A673 (cell line): ENCODE measurements at regions of chr3 and their contacts with region 1.

Region 1: GRCh38 chr3:82133070-82133606 is 371.7 kb upstream of the GBE1 start:
- DNase-seq: peak; percentile 57
- H3K4me3 ChIP-seq: no peak overlapping the region
- H3K27ac ChIP-seq: no peak overlapping the region
- H3K4me1 ChIP-seq: no peaks in the 10 kb centered on the region
- H3K27me3 ChIP-seq: no peaks in the 10 kb centered on the region
- CTCF ChIP-seq: peak; percentile 80

Region 2: GRCh38 chr3:81419228-81419627 is 713.9 kb before region 1 on chr3:
- CTCF ChIA-PET with region 1: no interaction called
- POLR2A ChIA-PET with region 1: no interaction called
- intact Hi-C with region 1: loop called (anchors 10 kb)
- DNase-seq: peak; percentile 5
- H3K4me3 ChIP-seq: no peak overlapping the region
- H3K27ac ChIP-seq: no peak overlapping the region
- H3K4me1 ChIP-seq: no peaks in the 10 kb centered on the region
- H3K27me3 ChIP-seq: no peaks in the 10 kb centered on the region
- CTCF ChIP-seq: peak; percentile 52; the same call in 1 of the 2 replicates

Region 3: DNA sequence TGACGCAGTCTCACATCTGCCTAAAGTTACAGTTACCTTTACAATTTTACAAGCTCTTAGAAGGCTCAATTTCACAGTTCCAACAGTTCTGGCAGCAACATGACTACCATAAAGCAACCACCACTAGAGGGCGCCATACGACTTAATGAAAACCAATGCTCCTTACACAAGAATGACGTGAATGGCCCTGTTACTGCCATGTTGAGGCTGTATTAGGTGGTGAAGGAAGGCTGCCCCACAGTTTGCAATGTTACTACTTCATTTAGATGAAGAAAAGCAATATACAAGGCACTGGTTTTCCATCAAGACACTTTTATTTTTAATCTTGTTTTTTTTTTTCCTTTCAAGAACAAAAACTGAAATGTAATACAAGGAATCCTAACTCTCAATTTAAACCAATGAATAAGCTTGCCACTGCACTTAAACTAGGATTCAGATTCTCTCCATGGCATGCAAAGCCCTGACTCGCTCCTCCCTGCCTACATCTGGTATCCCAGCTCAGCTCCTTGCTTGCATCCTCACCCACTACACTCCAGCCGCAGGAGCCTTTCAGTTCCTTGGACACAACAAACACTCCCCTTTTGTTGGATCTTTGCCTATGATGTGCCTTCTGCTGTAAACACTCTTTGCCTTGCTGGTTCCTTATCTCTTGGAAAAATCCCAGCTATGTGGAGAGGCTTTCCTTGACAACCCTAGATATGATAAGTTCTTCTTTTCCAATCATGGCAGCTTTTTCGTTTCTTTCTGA is 642.4 kb before region 1 on chr3:
- CTCF ChIA-PET with region 1: no interaction called
- POLR2A ChIA-PET with region 1: no interaction called
- intact Hi-C with region 1: loop called (anchors 5 kb)
- DNase-seq: peak; percentile 88
- H3K4me3 ChIP-seq: no peak overlapping the region
- H3K27ac ChIP-seq: no peak overlapping the region
- H3K4me1 ChIP-seq: no peaks in the 10 kb centered on the region
- H3K27me3 ChIP-seq: no peaks in the 10 kb centered on the region
- CTCF ChIP-seq: peak; percentile 88

Region 4: GRCh38 chr3:81581966-81582599 is 551.1 kb before region 1 on chr3:
- CTCF ChIA-PET with region 1: no interaction called
- POLR2A ChIA-PET with region 1: no interaction called
- intact Hi-C with region 1: loop called (anchors 10 kb)
- DNase-seq: peak; percentile 61
- H3K4me3 ChIP-seq: no peak overlapping the region
- H3K27ac ChIP-seq: no peak overlapping the region
- H3K4me1 ChIP-seq: no peaks in the 10 kb centered on the region
- H3K27me3 ChIP-seq: no peaks in the 10 kb centered on the region
- CTCF ChIP-seq: peak; percentile 80

Region 5: GRCh38 chr3:81666493-81667121 is 466.5 kb before region 1 on chr3:
- CTCF ChIA-PET with region 1: no interaction called
- POLR2A ChIA-PET with region 1: no interaction called
- intact Hi-C with region 1: loop called (anchors 1 kb)
- DNase-seq: peak; percentile 15
- H3K4me3 ChIP-seq: no peak overlapping the region
- H3K27ac ChIP-seq: no peak overlapping the region
- H3K4me1 ChIP-seq: no peaks in the 10 kb centered on the region
- H3K27me3 ChIP-seq: no peaks in the 10 kb centered on the region
- CTCF ChIP-seq: peak; percentile 76

Region 6: DNA sequence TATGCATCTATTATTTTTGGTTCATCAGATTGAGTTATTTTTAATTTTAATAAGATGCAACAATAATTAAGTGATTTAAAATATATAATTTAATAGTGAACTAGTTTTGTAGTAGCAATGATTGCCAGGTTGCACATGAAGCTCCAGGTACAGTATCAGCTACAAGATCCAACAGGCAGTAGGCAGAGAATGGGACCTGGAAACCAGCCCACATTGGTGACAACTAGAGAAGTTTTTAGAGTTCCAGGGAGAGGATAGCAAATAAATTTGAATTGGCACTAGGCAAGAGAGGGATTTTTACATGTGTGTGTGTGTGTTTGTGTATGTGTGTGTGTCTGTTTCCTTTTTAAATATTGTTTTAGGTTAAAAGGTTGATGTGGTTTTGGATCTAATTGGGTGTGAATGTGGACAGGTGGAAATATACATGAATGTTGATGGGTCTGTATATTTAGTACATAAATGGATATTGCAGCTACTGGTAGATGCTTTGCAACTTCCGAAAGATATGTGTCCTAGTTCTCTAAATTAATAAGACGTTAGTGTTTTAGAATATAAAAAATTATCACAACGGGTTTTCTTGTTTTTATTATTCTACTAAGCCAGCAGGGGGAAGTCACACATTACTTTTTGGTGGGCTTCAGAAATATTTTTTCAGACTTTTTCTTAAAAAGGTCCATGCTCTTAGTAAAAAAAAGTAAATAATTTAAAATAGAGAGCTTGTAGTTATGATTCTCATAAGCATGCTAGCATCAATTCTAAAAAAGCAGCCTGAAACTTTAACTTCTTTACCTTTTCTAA is 261.6 kb before region 1 on chr3:
- CTCF ChIA-PET with region 1: no interaction called
- POLR2A ChIA-PET with region 1: no interaction called
- intact Hi-C with region 1: loop called (anchors 1 kb)
- DNase-seq: peak; percentile 5
- H3K4me3 ChIP-seq: no peak overlapping the region
- H3K27ac ChIP-seq: no peak overlapping the region
- H3K4me1 ChIP-seq: no peaks in the 10 kb centered on the region
- H3K27me3 ChIP-seq: no peaks in the 10 kb centered on the region
- CTCF ChIP-seq: peak; percentile 30; the same call in 1 of the 2 replicates

Region 7: DNA sequence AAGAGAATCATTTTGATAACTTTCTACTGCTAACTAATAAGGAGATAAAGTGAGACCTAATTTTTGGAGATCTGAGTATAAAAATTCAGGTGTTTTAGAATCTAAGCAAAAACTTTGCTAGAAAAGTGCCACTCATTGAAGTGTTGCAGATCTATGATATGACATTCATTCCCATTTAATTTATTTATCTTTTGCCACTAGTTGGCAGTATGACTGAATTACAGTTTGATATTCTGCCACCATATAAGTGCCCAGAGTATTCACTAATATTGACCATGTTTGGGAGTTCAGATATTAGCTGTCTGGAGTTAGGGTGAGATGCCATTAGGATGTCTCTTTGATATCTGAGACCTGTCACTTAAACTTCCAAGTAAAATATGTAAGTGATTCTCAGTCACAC is 120.4 kb before region 1 on chr3:
- CTCF ChIA-PET with region 1: no interaction called
- POLR2A ChIA-PET with region 1: no interaction called
- intact Hi-C with region 1: no loop called
- DNase-seq: no peak
- H3K4me3 ChIP-seq: no peak overlapping the region
- H3K27ac ChIP-seq: no peak overlapping the region
- H3K4me1 ChIP-seq: no peaks in the 10 kb centered on the region
- H3K27me3 ChIP-seq: no peaks in the 10 kb centered on the region
- CTCF ChIP-seq: peak; percentile 34; the same call in 1 of the 2 replicates